Ovary (tissue), 10 donors: ENCODE measurements at regions of chr5 and their contacts with region 1.

Region 1: DNA sequence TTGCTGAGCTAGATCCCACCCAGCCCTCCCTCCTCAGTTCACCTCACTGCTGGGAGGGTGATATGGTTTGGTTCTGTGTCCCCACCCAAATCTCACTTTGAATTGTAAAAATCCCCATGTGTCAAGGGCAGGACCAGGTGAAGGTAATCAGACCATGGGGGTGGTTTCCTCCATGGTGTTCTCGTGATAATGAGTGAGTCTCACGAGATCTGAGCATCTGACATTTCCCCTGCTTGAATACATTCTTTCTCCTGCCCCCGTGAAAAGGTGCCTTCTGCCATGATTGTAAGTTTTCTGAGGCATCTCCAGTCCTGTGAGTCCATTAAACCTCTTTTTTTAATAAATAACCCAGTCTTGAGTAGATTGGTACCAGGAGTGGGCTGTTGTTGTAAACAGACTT is 469.9 kb upstream of the DAP start:
- DNase-seq: no peak
- H3K4me3 ChIP-seq: no peak overlapping the region
- H3K27ac ChIP-seq: no peak overlapping the region
- H3K4me1 ChIP-seq: no peaks in the 10 kb centered on the region
- H3K27me3 ChIP-seq: no peaks in the 10 kb centered on the region
- CTCF ChIP-seq: no peak
- EP300 ChIP-seq: no peak
- POLR2A ChIP-seq: no peak

Region 2: DNA sequence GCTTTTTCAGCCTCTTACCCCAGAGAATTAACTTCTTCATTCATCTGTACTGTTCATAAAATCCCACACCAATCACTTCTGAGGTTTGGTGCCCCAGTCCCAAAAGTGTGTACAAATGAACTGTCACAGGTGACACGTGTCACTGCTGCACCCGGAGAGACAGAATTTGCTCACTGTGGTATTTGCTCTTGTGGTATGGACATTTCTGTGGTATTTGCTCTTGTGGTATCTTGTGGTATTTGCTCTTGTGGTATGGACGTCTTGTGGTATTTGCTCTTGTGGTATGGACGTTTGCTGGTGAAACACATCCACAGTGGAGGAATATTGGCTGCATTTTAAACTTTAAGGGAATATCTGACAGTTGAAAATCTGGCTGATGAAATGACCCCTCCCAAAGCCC is 254.9 kb before region 1 on chr5:
- intact Hi-C with region 1: no loop called
- DNase-seq: no peak
- H3K4me3 ChIP-seq: no peak overlapping the region
- H3K27ac ChIP-seq: no peak overlapping the region
- H3K4me1 ChIP-seq: no peaks in the 10 kb centered on the region
- H3K27me3 ChIP-seq: no peaks in the 10 kb centered on the region
- CTCF ChIP-seq: no peak
- EP300 ChIP-seq: no peak
- POLR2A ChIP-seq: no peak

Region 3: GRCh38 chr5:11191673-11192072 is 39.2 kb before region 1 on chr5:
- intact Hi-C with region 1: loop called in 1 of 4 experiments (anchors 2 kb)
- DNase-seq: no peak
- H3K4me3 ChIP-seq: no peak overlapping the region
- H3K27ac ChIP-seq: no peak overlapping the region
- H3K4me1 ChIP-seq: no peaks in the 10 kb centered on the region
- H3K27me3 ChIP-seq: no peaks in the 10 kb centered on the region
- CTCF ChIP-seq: no peak
- EP300 ChIP-seq: no peak
- POLR2A ChIP-seq: no peak

Region 4: GRCh38 chr5:11251262-11251661 is 20.4 kb after region 1 on chr5:
- intact Hi-C with region 1: no loop called
- DNase-seq: no peak
- H3K4me3 ChIP-seq: no peak overlapping the region
- H3K27ac ChIP-seq: no peak overlapping the region
- H3K4me1 ChIP-seq: no peaks in the 10 kb centered on the region
- H3K27me3 ChIP-seq: no peaks in the 10 kb centered on the region
- CTCF ChIP-seq: no peak
- EP300 ChIP-seq: no peak
- POLR2A ChIP-seq: no peak